Activated T-helper 2 cell treated with anti-CD3 and anti-CD28 coated beads, Interferon-gamma antibody, Interleukin-2, Interleukin-4, amounts not matched to agents 10 μg/mL and 5 μg/mL and 100 μg/mL, durations not matched to agents 14 hours and 24 hours and 36 hours (primary cell): ENCODE measurements at regions of chr15 and their contacts with region 1.

Region 1: GRCh38 chr15:89416141-89416853 is 80.1 kb downstream of the RHCG start:
- DNase-seq: peak; percentile 68
- H3K4me3 Mint-ChIP-seq: no peak overlapping the region
- H3K27ac Mint-ChIP-seq: no peak overlapping the region
- H3K4me1 Mint-ChIP-seq: peaks cover 8% of the 10 kb centered on the region
- H3K27me3 Mint-ChIP-seq: peaks cover 73% of the 10 kb centered on the region

Region 2: GRCh38 chr15:88849376-88850072 is 566.8 kb before region 1 on chr15:
- intact Hi-C with region 1: no loop called
- DNase-seq: no peak
- H3K4me3 Mint-ChIP-seq: no peak overlapping the region
- H3K27ac Mint-ChIP-seq: no peak overlapping the region
- H3K4me1 Mint-ChIP-seq: peaks cover 6% of the 10 kb centered on the region
- H3K27me3 Mint-ChIP-seq: no peaks in the 10 kb centered on the region

Region 3: DNA sequence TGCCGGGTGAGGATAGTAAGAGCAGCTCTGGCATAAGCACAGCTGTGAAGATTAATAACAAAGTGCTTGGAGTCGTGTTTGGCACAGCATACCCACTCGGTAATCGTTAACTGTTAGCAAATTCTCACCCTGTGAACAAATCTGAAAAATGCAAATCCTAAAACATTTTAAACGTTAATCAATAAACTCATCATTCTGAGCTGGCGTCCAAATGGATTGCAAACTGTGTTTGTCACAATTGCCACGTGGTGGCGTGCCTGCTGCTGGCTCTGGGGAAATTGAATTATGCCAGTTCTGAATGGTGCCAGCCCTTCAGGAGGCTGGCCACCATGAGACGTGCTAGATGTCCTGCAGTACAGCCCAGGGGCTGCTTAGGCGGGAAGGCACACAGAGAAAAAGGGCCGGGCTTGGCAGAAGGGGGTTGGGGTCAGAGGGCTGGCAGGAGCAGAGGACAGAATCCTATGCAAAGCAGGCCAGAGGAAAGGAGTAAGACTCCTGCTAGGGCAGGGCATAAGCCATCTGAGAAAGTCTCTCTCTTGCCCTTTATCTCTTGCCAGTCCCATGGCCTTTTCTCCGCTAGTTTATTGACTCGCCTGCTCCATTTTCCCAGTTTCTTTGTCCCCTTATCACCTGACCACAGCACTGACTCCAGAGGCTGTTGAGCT is 59.5 kb before region 1 on chr15:
- intact Hi-C with region 1: no loop called
- DNase-seq: no peak
- H3K4me3 Mint-ChIP-seq: no peak overlapping the region
- H3K27ac Mint-ChIP-seq: no peak overlapping the region
- H3K4me1 Mint-ChIP-seq: peaks cover 5% of the 10 kb centered on the region
- H3K27me3 Mint-ChIP-seq: peaks cover 61% of the 10 kb centered on the region

Region 4: GRCh38 chr15:89399238-89400120 is 16.8 kb before region 1 on chr15:
- intact Hi-C with region 1: loop called (anchors 1 kb)
- DNase-seq: no peak
- H3K4me3 Mint-ChIP-seq: peak overlapping the region; percentile 68
- H3K27ac Mint-ChIP-seq: no peak overlapping the region
- H3K4me1 Mint-ChIP-seq: peaks cover 13% of the 10 kb centered on the region
- H3K27me3 Mint-ChIP-seq: peaks cover 66% of the 10 kb centered on the region

Region 5: GRCh38 chr15:89430530-89431341 is 14.4 kb after region 1 on chr15:
- intact Hi-C with region 1: loop called (anchors 1 kb)
- DNase-seq: peak; percentile 80
- H3K4me3 Mint-ChIP-seq: peak overlapping the region; percentile 77
- H3K27ac Mint-ChIP-seq: no peak overlapping the region
- H3K4me1 Mint-ChIP-seq: peaks cover 5% of the 10 kb centered on the region
- H3K27me3 Mint-ChIP-seq: peaks cover 28% of the 10 kb centered on the region

Region 6: GRCh38 chr15:89898614-89899294 is 482.5 kb after region 1 on chr15:
- intact Hi-C with region 1: no loop called
- DNase-seq: peak; percentile 20
- H3K4me3 Mint-ChIP-seq: no peak overlapping the region
- H3K27ac Mint-ChIP-seq: no peak overlapping the region
- H3K4me1 Mint-ChIP-seq: peaks cover 15% of the 10 kb centered on the region
- H3K27me3 Mint-ChIP-seq: no peaks in the 10 kb centered on the region